CD4-positive, alpha-beta T cell (primary cell): ENCODE measurements at regions of chr3 and their contacts with region 1.

Region 1: GRCh38 chr3:55128231-55128791 is 200.5 kb upstream of the LRTM1 start:
- DNase-seq: no peak
- ATAC-seq: no peak
- H3K4me3 ChIP-seq: no peak overlapping the region
- H3K4me3 Mint-ChIP-seq: no peak overlapping the region
- H3K27ac ChIP-seq: no peak overlapping the region
- H3K27ac Mint-ChIP-seq: no peak overlapping the region
- H3K4me1 ChIP-seq: no peaks in the 10 kb centered on the region
- H3K4me1 Mint-ChIP-seq: no peaks in the 10 kb centered on the region
- H3K27me3 ChIP-seq: no peaks in the 10 kb centered on the region
- H3K27me3 Mint-ChIP-seq: no peaks in the 10 kb centered on the region
- CTCF ChIP-seq: no peak

Region 2: GRCh38 chr3:55180936-55181535 is 52.7 kb after region 1 on chr3:
- CTCF ChIA-PET with region 1: no interaction called
- POLR2A ChIA-PET with region 1: no interaction called
- intact Hi-C with region 1: loop called in 1 of 2 experiments (anchors 10 kb)
- DNase-seq: peak in 1 of 14 experiments; percentile 3
- ATAC-seq: no peak
- H3K4me3 ChIP-seq: no peak overlapping the region
- H3K4me3 Mint-ChIP-seq: no peak overlapping the region
- H3K27ac ChIP-seq: no peak overlapping the region
- H3K27ac Mint-ChIP-seq: no peak overlapping the region
- H3K4me1 ChIP-seq: no peaks in the 10 kb centered on the region
- H3K4me1 Mint-ChIP-seq: no peaks in the 10 kb centered on the region
- H3K27me3 ChIP-seq: no peaks in the 10 kb centered on the region
- H3K27me3 Mint-ChIP-seq: no peaks in the 10 kb centered on the region
- CTCF ChIP-seq: peak; percentile 47